Activated CD4-positive, alpha-beta memory T cell treated with anti-CD3 and anti-CD28 coated beads, Interleukin-2, amount 10 ng/mL, durations not matched to agents 7 days and 5 days (primary cell): ENCODE measurements at regions of chr11 and their contacts with region 1.

Region 1: DNA sequence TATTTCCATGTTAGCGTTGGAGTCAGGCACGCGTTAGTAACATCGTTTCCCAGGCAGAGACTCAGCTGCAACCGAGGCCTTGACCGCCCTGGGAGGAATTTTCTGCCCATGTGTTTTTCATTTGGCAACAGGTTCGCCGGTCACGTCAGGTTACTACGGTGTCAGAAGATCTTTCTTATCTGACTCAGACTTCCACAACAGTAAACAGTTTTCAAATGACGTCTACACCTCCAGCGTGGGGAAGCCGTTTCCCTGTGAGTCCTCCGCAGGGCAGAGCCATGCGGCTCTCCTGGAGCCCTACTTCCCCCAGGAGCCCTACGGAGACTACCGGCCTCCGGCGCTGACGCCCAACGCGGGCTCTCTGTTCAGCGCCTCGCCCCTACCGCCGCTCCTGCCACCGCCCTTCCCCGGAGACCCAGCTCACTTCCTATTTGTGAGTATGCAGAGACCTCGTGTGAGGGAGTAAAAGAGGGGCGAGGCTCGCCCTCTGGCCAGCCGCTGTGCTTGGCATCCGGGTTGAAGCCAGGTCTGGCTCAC is 14.3 kb upstream of the POU2AF3 start:
- DNase-seq: no peak
- H3K4me3 Mint-ChIP-seq: no peak overlapping the region
- H3K27ac Mint-ChIP-seq: no peak overlapping the region
- H3K4me1 Mint-ChIP-seq: no peaks in the 10 kb centered on the region
- H3K27me3 Mint-ChIP-seq: peaks cover 2% of the 10 kb centered on the region

Region 2: DNA sequence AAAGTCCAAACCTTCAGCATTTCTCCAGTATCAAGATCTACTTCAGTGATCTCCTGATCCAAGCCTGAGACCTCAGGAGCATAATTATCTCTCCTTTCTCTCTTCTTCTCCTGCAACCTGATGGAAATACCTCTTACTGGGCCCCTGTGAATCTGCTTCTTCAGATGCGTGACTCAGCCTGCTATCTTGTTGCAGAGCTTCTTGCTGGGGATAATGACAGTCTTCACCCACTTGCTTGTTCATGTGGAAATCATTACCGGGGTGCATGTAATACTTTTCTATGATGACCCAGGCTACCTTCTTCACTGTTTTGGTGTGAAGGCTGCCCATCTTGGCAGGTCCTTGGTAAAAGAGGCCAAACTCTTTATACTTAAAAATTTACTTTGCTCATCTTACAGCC is 178.4 kb before region 1 on chr11:
- CTCF ChIA-PET with region 1: no interaction called
- POLR2A ChIA-PET with region 1: no interaction called
- DNase-seq: no peak
- H3K4me3 Mint-ChIP-seq: no peak overlapping the region
- H3K27ac Mint-ChIP-seq: no peak overlapping the region
- H3K4me1 Mint-ChIP-seq: no peaks in the 10 kb centered on the region
- H3K27me3 Mint-ChIP-seq: peaks cover 11% of the 10 kb centered on the region

Region 3: GRCh38 chr11:111422494-111423249 is 138.7 kb after region 1 on chr11:
- CTCF ChIA-PET with region 1: interaction called, 95 read pairs
- POLR2A ChIA-PET with region 1: interaction called, 3 read pairs
- DNase-seq: peak; percentile 42
- H3K4me3 Mint-ChIP-seq: no peak overlapping the region
- H3K27ac Mint-ChIP-seq: no peak overlapping the region
- H3K4me1 Mint-ChIP-seq: peaks cover 5% of the 10 kb centered on the region
- H3K27me3 Mint-ChIP-seq: peaks cover 2% of the 10 kb centered on the region

Region 4: GRCh38 chr11:111429066-111429506 is 145.1 kb after region 1 on chr11:
- CTCF ChIA-PET with region 1: interaction called, 95 read pairs
- POLR2A ChIA-PET with region 1: no interaction called
- DNase-seq: peak; percentile 70
- H3K4me3 Mint-ChIP-seq: no peak overlapping the region
- H3K27ac Mint-ChIP-seq: no peak overlapping the region
- H3K4me1 Mint-ChIP-seq: peaks cover 2% of the 10 kb centered on the region
- H3K27me3 Mint-ChIP-seq: peaks cover 5% of the 10 kb centered on the region

Region 5: DNA sequence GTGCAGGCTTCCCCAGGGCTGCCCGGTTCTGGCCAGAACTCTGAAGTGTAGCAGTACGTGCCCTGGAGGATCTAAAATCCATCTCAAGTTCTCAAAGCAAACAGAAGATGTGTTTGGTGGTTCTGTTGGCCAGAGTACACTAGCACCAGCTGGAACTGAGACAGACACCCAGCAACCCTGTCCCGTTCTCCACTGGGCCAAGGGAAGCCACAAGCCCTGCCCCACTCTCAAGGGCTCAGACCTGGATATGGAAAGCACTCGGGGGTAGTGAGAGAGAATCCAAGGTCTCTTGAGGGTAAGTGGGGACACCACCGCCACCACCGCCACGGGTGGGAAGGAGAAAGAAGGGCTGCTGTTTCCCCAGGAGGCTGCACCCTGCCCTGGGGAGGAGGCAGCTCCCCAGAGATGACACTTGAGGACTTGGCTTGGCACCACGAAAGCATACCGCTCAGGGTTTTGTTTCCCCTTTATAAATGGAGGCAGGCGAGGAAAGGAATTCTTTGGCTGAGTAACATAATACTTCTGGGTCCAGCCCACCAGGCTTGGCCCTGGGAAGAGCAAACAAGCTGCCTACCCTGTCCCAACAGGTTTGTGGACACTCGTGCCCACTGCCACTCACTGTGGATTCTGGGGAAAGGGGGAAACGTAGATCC is 151.2 kb after region 1 on chr11:
- CTCF ChIA-PET with region 1: interaction called, 95 read pairs
- POLR2A ChIA-PET with region 1: no interaction called
- DNase-seq: no peak
- H3K4me3 Mint-ChIP-seq: no peak overlapping the region
- H3K27ac Mint-ChIP-seq: no peak overlapping the region
- H3K4me1 Mint-ChIP-seq: peaks cover 13% of the 10 kb centered on the region
- H3K27me3 Mint-ChIP-seq: peaks cover 5% of the 10 kb centered on the region

Region 6: DNA sequence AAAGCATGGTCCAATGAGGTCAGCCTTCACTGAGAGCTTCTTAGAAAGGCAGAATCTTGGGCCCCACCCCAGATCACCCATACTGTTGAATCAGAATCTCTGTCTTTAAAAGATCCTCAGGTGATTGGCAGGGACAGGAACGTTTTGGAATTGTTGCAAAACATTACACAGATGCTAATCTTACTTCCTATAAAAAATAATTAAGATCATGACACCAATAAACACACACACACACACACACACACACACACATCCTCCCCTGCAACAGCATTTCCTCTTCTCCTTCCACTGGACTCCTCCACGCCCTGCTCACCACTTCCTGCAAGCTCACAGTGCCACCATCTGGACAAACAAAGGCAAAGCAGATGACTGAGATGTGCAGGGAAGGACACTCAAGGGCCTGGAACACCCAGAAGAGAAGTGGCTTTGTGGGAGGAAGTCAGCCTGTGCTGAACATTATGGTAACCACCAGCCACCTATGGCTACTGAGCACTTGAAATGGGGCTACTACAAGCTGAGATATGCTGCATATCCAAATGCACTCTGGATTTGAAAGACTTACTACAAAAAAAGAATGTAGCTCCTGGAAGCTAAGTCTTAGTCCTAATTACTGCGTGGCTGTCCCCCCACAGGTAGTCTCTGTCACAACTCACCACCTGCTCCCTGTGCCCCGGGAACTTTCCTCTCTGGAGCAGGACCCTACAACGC is 162.5 kb after region 1 on chr11:
- CTCF ChIA-PET with region 1: interaction called, 78 read pairs
- POLR2A ChIA-PET with region 1: no interaction called
- DNase-seq: peak; percentile 87
- H3K4me3 Mint-ChIP-seq: no peak overlapping the region
- H3K27ac Mint-ChIP-seq: peak overlapping the region; percentile 32
- H3K4me1 Mint-ChIP-seq: peaks cover 19% of the 10 kb centered on the region
- H3K27me3 Mint-ChIP-seq: peaks cover 2% of the 10 kb centered on the region